Dorsolateral prefrontal cortex (tissue), 120 donors: ENCODE measurements at regions of chr3 and their contacts with region 1.

Region 1: GRCh38 chr3:123620343-123620742 is 35.5 kb upstream of the HACD2 start:
- DNase-seq: peak in 2 of 10 donors; percentile 43 to 62
- H3K4me3 ChIP-seq: peak overlapping the region in 56 of 59 donors; percentile 3 to 65 (median 43)
- H3K27ac ChIP-seq: peak overlapping the region; percentile 40 to 94 (median 85)
- H3K27me3 ChIP-seq: no peaks in the 10 kb centered on the region
- CTCF ChIP-seq: peak in 2 of 56 donors; percentile 14

Region 2: DNA sequence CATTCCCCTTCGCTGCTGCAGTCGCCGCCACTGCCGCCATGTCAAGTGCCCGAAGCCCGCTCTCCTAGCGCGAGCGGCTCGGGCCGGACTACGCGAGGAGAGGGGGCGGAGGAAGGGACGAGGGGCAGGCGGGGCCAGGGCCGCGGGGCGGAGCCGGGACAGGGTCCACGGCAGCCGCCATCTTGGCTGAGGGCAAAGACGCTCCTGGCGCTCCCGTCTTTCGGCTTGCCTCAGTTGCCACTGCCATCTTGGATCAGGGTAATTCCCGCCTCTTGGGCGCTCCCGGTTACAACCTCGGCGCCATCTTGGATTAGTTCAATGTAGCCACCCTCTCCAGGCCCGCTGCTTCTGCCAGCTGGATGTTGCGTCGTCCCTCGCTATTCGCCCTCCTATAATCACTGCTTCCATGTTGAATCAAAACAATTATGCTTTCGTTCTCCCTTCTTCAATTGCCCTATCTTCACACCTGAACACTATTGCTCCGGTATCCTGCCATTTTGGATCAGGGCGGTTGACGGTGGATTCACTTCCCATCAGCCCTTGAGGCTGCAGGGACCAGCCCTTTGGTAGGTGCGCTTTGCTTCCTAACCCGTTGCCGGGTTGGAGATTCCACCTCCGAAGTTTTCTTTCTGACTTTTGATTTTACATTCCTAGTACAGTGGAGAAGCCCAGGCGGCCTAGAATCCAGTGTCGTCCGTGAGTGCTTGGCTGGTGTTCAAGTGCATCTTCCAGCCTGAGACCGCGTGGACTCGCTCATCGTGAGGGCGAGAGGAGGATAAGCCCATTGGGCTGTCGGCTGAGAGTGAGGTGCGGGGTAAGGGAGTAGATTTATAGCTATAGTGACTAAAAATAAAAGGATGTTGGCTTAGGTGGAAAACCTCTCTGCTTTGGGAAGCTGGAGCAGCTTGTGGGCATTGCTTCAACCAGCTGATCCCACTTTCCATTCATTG is 35.1 kb before region 1 on chr3 and contains the start of gene HACD2:
- intact Hi-C with region 1: loop called in 1 of 2 experiments (anchors 2 kb)
- DNase-seq: peak; percentile 92 to 98 (median 96)
- H3K4me3 ChIP-seq: peak within 1 kb of the TSS; percentile 53 to 97 (median 89)
- H3K27ac ChIP-seq: peak within 1 kb of the TSS; percentile 83 to 100 (median 97)
- H3K27me3 ChIP-seq: no peaks in the 10 kb centered on the region
- CTCF ChIP-seq: peak in 24 of 56 donors; percentile 6 to 34 (median 18)
- total RNA-seq, gene HACD2: 26.7 to 65.5 (median 39.9) TPM

Region 3: DNA sequence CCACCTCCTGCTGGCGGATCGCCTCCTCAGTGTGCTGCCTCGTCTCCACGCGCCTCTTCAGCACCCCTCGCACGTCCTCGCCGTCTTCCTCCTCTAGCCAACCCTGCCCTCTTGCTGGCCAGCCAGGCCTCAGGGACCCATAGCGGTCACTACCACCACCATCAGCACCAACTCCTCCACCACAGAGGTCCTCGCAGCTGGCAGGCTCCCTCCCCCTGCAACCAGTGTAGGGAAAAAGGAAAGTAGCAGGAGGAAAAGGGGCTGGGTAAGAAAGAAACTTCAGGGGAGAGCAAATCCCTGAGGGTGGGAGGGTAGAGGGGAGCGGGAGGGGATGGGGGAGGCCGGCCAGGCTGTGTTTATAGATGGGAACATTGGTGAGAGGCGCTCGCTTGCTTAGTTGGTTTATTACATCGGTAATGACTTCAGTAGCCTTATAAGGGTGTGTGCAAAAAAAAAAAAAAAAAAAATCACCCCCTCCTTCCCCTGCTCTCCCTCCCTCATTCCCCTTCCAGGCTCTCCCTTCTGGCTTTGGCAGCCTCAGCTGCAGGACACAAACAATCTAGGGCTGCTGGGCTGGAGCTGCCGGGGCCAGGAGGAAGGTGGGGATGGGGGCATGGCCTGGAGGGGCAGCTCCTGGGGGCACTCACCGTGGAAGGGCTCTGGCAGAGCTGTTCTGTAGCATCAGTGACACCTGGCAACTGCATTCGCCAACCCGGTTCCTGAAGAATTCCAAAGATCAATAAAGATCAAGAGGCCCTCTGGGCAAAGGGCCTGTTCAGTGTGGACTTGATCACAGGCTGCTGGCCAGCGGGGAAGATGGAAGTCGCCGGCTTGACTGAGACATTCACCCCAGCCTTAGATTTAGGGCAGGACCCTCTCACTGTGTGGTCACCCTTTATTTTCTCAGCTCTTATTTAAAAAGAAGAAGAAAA is 80.7 kb after region 1 on chr3:
- intact Hi-C with region 1: no loop called
- DNase-seq: no peak
- H3K4me3 ChIP-seq: peak overlapping the region in 52 of 59 donors; percentile 10 to 59 (median 42)
- H3K27ac ChIP-seq: peak overlapping the region in 46 of 59 donors; percentile 1 to 81 (median 60)
- H3K27me3 ChIP-seq: no peaks in the 10 kb centered on the region
- CTCF ChIP-seq: no peak